Endothelial cell of umbilical vein (primary cell): ENCODE measurements at regions of chr12 and their contacts with region 1.

Region 1: GRCh38 chr12:133130038-133130807 is at the starts of genes ZNF10 and ZNF891:
- DNase-seq: peak; percentile 99
- H3K4me3 ChIP-seq: peak within 1 kb of the TSS; percentile 62 to 88 (median 87)
- H3K27ac ChIP-seq: peak within 1 kb of the TSS; percentile 86
- H3K4me1 ChIP-seq: no peaks in the 10 kb centered on the region
- H3K27me3 ChIP-seq: no peaks in the 10 kb centered on the region
- CTCF ChIP-seq: no peak
- POLR2A ChIP-seq: peak; percentile 79
- total RNA-seq, gene ZNF10: 4.4 and 5.8 TPM in 2 replicates
- total RNA-seq, gene ZNF891: 1.2 and 1.5 TPM in 2 replicates

Region 2: DNA sequence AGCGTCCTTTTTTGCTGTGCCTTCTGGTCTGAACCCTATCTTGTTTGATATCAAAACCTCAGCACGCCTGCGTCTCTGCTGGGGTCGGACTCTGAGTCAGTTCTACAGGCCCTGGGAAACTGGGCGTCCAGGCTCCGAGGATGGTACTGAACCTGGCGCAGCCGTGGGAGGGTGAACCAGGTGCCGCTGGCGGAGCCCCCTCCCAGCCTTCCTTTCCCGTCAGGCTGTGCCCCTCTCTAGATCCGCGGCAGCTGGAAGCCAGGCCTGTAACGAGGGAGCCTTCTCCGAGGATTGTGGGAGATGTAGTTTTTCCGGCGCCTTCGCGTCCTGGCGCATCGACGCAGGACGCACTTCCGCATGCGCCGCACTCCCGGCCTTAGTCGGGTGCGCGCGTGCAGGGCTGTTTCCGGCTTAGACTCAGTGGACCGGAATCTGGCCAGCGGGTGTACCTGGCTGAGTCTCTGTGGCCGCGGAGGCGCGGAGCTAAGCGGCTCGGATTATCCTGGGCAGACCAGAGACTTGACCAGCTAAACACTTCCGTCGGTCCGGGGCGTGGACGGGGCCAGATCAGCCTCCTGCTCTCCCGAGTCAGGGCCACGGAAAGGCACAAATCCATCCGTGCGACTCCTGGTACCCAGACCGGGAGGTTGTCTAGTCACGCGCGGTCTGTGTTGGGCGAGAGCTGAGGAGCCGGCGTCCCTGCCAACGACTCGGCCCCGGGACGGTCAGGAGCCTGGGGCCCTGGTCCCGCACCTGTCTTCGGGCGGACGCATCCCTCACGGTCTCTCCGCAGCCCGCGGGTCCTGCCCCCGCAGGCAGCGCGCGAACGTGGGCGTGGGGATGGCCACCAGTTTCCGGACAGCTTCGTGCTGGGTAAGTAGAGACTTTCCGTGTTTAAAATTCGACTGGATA is 144.0 kb before region 1 on chr12 and contains the start of gene ZNF26:
- CTCF ChIA-PET with region 1: no interaction called
- POLR2A ChIA-PET with region 1: no interaction called
- dilution Hi-C with region 1: no loop called
- intact Hi-C with region 1: loop called (anchors 1 kb)
- DNase-seq: peak; percentile 94
- H3K4me3 ChIP-seq: peak within 1 kb of the TSS; percentile 16 to 91 (median 61)
- H3K27ac ChIP-seq: peak within 1 kb of the TSS; percentile 59
- H3K4me1 ChIP-seq: peaks cover 11% of the 10 kb centered on the region
- H3K27me3 ChIP-seq: no peaks in the 10 kb centered on the region
- CTCF ChIP-seq: no peak
- POLR2A ChIP-seq: peak; percentile 74
- total RNA-seq, gene ZNF26: 9.7 and 11.1 TPM in 2 replicates

Region 3: GRCh38 chr12:133037207-133038005 is 92.8 kb before region 1 on chr12 and contains the start of gene ZNF84:
- CTCF ChIA-PET with region 1: no interaction called
- POLR2A ChIA-PET with region 1: no interaction called
- dilution Hi-C with region 1: no loop called
- intact Hi-C with region 1: loop called (anchors 1 kb)
- DNase-seq: peak; percentile 99
- H3K4me3 ChIP-seq: peak within 1 kb of the TSS; percentile 42 to 90 (median 78)
- H3K27ac ChIP-seq: peak within 1 kb of the TSS; percentile 59
- H3K4me1 ChIP-seq: no peaks in the 10 kb centered on the region
- H3K27me3 ChIP-seq: no peaks in the 10 kb centered on the region
- CTCF ChIP-seq: no peak
- POLR2A ChIP-seq: peak; percentile 83
- total RNA-seq, gene ZNF84: 26.0 TPM in 2 replicates

Region 4: GRCh38 chr12:133181238-133181959 is 51.2 kb after region 1 on chr12 and contains the start of gene ZNF268:
- CTCF ChIA-PET with region 1: interaction called, 13 read pairs
- POLR2A ChIA-PET with region 1: no interaction called
- dilution Hi-C with region 1: no loop called
- intact Hi-C with region 1: loop called (anchors 1 kb)
- DNase-seq: peak; percentile 91
- H3K4me3 ChIP-seq: peak within 1 kb of the TSS; percentile 27 to 88 (median 68)
- H3K27ac ChIP-seq: peak within 1 kb of the TSS; percentile 31
- H3K4me1 ChIP-seq: peaks cover 3% of the 10 kb centered on the region
- H3K27me3 ChIP-seq: no peaks in the 10 kb centered on the region
- CTCF ChIP-seq: peak; percentile 83 to 88
- POLR2A ChIP-seq: peak; percentile 77
- total RNA-seq, gene ZNF268: 17.3 and 18.2 TPM in 2 replicates